ENCODE measurements at regions of chr6 and their contacts with region 1.

Region 1: GRCh38 chr6:31087494-31088089 is 24.8 kb downstream of the C6orf15 start:
- DNase-seq: peak; percentile 75 to 86 (median 82)
- H3K4me3 ChIP-seq: no peak overlapping the region
- H3K4me3 Mint-ChIP-seq: peak overlapping the region in 1 of 8 donors; percentile 44
- H3K27ac ChIP-seq: no peak overlapping the region
- H3K27ac Mint-ChIP-seq: peak overlapping the region in 4 of 7 donors; percentile 32 to 58 (median 44)
- H3K4me1 ChIP-seq: peaks cover 16% of the 10 kb centered on the region
- H3K4me1 Mint-ChIP-seq: peaks cover 11 to 24% (median 18%) of the 10 kb centered on the region in 4 donors
- H3K27me3 ChIP-seq: no peaks in the 10 kb centered on the region
- H3K27me3 Mint-ChIP-seq: peaks cover 0 to 4% of the 10 kb centered on the region in 2 donors

Region 2: GRCh38 chr6:30453508-30454116 is 634.0 kb before region 1 on chr6:
- CTCF ChIA-PET with region 1: no interaction called
- POLR2A ChIA-PET with region 1: no interaction called
- intact Hi-C with region 1: loop called (anchors 10 kb)
- DNase-seq: peak; percentile 77 to 84 (median 81)
- H3K4me3 ChIP-seq: peak overlapping the region in 1 of 2 donors; percentile 28
- H3K4me3 Mint-ChIP-seq: peak overlapping the region; percentile 52 to 77 (median 62)
- H3K27ac ChIP-seq: no peak overlapping the region
- H3K27ac Mint-ChIP-seq: peak overlapping the region in 1 of 7 donors; percentile 17
- H3K4me1 ChIP-seq: peaks cover 47% of the 10 kb centered on the region
- H3K4me1 Mint-ChIP-seq: peaks cover 31 to 54% (median 43%) of the 10 kb centered on the region in 4 donors
- H3K27me3 ChIP-seq: peaks cover 80% of the 10 kb centered on the region
- H3K27me3 Mint-ChIP-seq: peaks cover 50 to 56% of the 10 kb centered on the region in 2 donors

Region 3: DNA sequence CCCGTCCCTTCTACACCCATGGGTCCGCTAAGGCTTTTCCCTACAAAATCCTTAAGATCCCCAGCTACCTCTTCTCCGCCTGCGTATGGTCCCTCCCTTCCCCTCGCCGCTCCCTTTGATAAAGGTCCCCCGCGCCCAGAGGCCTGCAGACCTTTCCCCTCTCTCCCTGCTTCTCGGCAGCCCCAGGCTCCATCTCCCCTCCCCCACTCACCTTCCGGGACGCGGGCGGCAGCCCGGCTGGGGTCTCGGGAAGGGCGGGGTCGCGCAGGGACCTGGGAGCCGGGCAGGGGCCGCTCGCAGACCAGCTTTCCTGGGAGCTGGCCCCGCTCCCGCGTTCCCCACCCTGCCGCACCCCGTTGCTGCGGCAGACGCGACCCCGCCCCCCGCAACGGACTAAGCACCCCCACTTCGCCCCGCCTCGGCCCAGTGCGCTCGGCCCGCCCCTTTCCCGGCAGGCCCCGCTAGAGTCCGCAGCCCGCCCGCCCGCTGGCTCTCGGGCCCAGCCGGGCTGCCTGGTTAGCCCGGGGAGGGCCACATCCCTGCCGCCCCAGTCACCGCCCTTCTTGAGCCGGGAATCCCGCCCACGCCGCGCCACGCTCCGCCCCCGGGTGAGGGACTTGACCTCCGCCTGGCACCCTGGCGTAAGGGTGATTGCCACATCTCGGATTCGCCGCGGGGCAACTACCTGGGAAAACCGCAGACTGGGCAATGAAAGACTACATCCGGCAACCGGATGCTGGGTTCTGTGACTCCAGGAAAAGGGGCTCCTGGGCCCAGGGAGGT is 345.1 kb before region 1 on chr6 and contains the start of gene FLOT1:
- CTCF ChIA-PET with region 1: interaction called, 6 read pairs
- POLR2A ChIA-PET with region 1: no interaction called
- intact Hi-C with region 1: loop called (anchors 2 kb)
- DNase-seq: peak; percentile 67 to 88 (median 68)
- H3K4me3 ChIP-seq: peak within 1 kb of the TSS; percentile 50 to 64
- H3K4me3 Mint-ChIP-seq: peak within 1 kb of the TSS; percentile 87 to 97 (median 91)
- H3K27ac ChIP-seq: peak within 1 kb of the TSS; percentile 63
- H3K27ac Mint-ChIP-seq: peak within 1 kb of the TSS; percentile 84 to 98 (median 93)
- H3K4me1 ChIP-seq: peaks cover 54% of the 10 kb centered on the region
- H3K4me1 Mint-ChIP-seq: peaks cover 44 to 75% (median 59%) of the 10 kb centered on the region in 4 donors
- H3K27me3 ChIP-seq: no peaks in the 10 kb centered on the region
- H3K27me3 Mint-ChIP-seq: no peaks in the 10 kb centered on the region
- total RNA-seq, gene FLOT1: 75.3 to 78.5 TPM

Region 4: DNA sequence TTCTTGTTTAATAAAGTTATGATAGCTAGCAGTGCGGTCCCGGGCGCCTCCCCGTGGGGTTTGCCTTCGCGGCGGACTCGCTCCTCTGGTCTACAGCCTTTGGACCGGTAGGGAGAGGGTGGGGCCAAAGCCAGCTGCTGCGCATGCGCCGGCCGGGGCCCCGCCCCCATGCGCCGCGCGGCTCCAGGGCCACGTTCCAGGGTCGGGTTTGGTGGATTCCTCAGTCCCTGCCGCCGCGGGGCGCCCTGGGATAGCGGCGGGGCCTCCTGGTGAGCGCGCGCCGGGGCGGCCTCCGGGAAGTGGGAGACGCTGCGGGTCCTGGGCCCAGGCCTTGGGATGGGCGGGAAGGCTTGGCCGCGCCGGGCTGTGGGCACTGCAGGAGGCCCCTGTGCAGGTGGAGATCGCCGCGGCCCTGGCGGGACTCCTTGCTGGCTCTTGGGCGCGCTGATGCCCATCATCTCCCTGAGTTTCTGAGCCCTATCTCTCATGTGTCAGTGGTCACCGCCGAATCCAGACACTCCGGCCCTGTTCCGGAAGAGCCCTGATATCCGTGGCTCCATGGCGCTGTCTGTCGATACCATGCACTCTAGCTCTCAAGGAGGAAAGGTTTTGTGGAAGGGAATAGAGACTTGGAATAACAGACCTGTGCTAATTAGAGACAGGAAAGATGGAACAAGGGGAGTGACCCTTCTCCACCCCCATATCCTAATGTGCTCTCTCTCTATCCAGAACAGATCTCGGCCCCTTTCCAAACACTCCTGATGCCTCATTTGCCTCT is 173.3 kb before region 1 on chr6 and contains the start of gene VARS2:
- CTCF ChIA-PET with region 1: interaction called, 34 read pairs
- POLR2A ChIA-PET with region 1: interaction called, 4 read pairs
- intact Hi-C with region 1: loop called (anchors 5 kb)
- DNase-seq: peak; percentile 86 to 92 (median 89)
- H3K4me3 ChIP-seq: peak within 1 kb of the TSS; percentile 70 to 94
- H3K4me3 Mint-ChIP-seq: peak within 1 kb of the TSS; percentile 89 to 96 (median 95)
- H3K27ac ChIP-seq: peak within 1 kb of the TSS; percentile 77
- H3K27ac Mint-ChIP-seq: peak within 1 kb of the TSS; percentile 83 to 98 (median 94)
- H3K4me1 ChIP-seq: peaks cover 21% of the 10 kb centered on the region
- H3K4me1 Mint-ChIP-seq: peaks cover 24 to 47% (median 34%) of the 10 kb centered on the region in 4 donors
- H3K27me3 ChIP-seq: no peaks in the 10 kb centered on the region
- H3K27me3 Mint-ChIP-seq: no peaks in the 10 kb centered on the region
- total RNA-seq, gene VARS2: 34.9 to 37.8 TPM

Region 5: DNA sequence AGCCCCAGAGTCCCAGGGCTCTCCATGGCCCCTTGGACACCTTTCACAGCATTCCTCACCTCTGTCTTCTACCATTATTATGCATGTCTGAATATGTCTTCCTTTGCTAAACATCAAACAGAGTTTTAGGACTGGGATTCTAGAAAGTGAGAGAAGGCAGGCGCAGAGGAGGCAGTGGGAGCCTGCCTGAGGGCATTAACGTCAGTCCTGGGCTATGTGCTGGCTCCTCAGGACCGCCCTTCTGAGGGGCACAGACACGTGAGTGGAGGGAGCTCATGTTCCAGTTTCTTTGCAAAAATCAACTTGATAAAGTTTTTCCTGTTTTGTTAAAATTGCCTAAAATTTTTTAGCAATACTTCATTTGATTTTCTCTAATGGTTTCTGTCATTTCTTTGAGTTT is 13.2 kb before region 1 on chr6:
- CTCF ChIA-PET with region 1: interaction called, 38 read pairs
- POLR2A ChIA-PET with region 1: interaction called, 3 read pairs
- intact Hi-C with region 1: loop called (anchors 1 kb)
- DNase-seq: no peak
- H3K4me3 ChIP-seq: no peak overlapping the region
- H3K4me3 Mint-ChIP-seq: no peak overlapping the region
- H3K27ac ChIP-seq: no peak overlapping the region
- H3K27ac Mint-ChIP-seq: peak overlapping the region in 1 of 7 donors; percentile 48
- H3K4me1 ChIP-seq: peaks cover 1% of the 10 kb centered on the region
- H3K4me1 Mint-ChIP-seq: peaks cover 0 to 2% (median 1%) of the 10 kb centered on the region in 4 donors
- H3K27me3 ChIP-seq: no peaks in the 10 kb centered on the region
- H3K27me3 Mint-ChIP-seq: peaks cover 0 to 1% of the 10 kb centered on the region in 2 donors

Region 6: GRCh38 chr6:31128093-31128676 is 40.6 kb after region 1 on chr6:
- CTCF ChIA-PET with region 1: interaction called, 29 read pairs
- POLR2A ChIA-PET with region 1: interaction called, 3 read pairs
- intact Hi-C with region 1: no loop called
- DNase-seq: peak; percentile 57 to 70 (median 62)
- H3K4me3 ChIP-seq: no peak overlapping the region
- H3K4me3 Mint-ChIP-seq: no peak overlapping the region
- H3K27ac ChIP-seq: no peak overlapping the region
- H3K27ac Mint-ChIP-seq: peak overlapping the region in 3 of 7 donors; percentile 7 to 52 (median 24)
- H3K4me1 ChIP-seq: peaks cover 3% of the 10 kb centered on the region
- H3K4me1 Mint-ChIP-seq: peaks cover 2 to 8% (median 7%) of the 10 kb centered on the region in 4 donors
- H3K27me3 ChIP-seq: no peaks in the 10 kb centered on the region
- H3K27me3 Mint-ChIP-seq: peaks cover 3 to 6% of the 10 kb centered on the region in 2 donors

Region 7: DNA sequence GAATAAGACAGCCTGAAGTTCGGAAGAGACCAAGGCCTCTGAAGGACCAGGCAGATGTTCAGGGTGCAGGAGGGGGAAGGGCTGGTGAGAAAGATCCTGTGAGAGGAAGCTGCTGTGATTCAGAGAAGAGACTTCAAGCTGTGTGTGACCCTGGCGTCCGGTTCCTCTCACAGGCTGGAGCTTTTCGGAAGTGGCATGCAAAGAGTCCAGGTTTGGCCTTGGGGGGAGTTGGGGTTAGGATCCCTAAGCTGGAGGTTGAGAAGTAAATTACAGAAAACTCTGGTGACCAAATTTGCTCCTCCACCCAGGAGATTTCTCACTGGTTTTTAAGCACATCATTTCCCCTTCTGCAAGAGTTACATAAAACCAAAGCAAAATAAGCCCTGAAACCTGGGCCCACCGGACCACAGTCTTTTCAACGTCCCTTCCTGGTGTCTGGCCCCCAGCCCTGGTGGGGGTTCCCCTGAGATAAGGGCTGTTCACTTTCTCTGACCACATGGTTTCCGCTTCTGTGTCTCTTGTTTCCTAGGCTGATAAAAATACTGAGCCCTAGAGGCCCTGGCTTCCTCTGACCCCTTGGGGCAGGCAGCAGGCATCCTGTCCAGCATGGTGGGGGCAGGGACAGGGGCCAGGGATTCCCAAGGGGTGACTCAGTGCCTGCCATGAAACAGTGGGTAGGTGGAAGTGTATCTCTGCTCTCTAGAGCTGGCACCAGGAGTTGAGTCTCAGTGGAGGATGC is 472.5 kb after region 1 on chr6:
- CTCF ChIA-PET with region 1: no interaction called
- POLR2A ChIA-PET with region 1: no interaction called
- intact Hi-C with region 1: no loop called
- DNase-seq: peak in 3 of 5 donors; percentile 35 to 76 (median 38)
- H3K4me3 ChIP-seq: peak overlapping the region in 1 of 2 donors; percentile 53
- H3K4me3 Mint-ChIP-seq: peak overlapping the region; percentile 78 to 90 (median 84)
- H3K27ac ChIP-seq: peak overlapping the region; percentile 58
- H3K27ac Mint-ChIP-seq: peak overlapping the region; percentile 91 to 99 (median 95)
- H3K4me1 ChIP-seq: peaks cover 87% of the 10 kb centered on the region
- H3K4me1 Mint-ChIP-seq: peaks cover 53 to 87% (median 65%) of the 10 kb centered on the region in 4 donors
- H3K27me3 ChIP-seq: no peaks in the 10 kb centered on the region
- H3K27me3 Mint-ChIP-seq: no peaks in the 10 kb centered on the region

Measured in CD4-positive, alpha-beta memory T cell (primary cell).